ENCODE measurements at regions of chr22 and their contacts with region 1.

Region 1: DNA sequence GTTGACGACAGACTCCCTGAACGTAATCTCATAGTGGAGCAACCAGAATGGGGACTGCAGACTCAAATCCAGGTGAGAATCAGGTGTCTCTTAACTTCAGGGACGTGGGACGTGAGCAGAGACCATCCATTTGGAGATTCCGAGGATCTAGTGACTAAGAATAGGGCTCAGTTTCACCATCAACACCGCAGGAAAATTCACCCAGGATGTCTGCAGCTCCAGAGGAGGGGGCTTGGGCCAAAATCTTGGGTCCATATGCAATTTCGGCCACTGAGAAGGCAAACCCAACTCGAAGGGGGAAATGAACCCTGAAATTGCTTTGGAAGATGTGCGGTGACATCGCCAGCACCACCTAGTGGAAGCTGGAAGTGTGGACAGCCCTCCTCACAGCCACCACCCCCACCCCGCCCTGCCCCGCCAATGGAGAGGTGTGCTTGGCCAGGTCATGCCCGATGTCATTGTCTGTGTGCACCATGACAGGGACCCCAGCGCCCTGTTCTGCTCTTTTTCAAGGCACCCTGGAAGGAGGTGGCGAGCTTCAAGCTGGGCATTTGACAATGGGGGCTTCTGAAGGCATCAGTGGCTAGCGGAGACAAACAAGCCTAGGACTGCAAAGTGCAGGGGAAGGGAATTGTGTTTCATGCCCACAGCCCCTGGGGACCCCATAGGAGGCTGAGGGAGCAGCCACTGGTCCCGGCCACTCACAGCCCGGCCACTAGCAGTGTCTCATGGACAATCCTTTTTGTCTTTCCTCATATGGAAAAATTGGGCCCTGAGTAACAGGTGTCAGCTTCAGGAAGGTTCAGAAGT is 24.8 kb downstream of the APOL1 start:
- DNase-seq: peak; percentile 80
- CTCF ChIP-seq: peak; percentile 68

Region 2: DNA sequence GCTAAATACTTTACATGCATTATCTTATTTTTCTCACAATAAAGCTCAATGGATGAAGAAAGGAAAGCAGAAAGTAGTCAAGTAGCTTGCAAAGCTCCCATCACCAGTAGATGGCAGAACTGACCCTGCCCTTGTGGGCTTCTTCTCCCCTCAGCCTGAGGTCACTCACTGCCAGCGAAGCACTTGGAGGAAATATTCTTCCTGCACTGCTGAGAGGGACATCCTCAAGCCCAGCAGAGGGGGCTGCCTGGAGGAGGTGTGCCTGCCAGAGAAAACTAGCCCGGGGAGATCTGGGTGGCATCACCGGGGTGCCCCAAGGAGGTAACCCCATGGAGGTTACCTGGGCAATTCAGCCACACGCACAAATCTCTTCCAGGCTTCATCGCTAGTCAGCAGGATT is 82.7 kb before region 1 on chr22:
- CTCF ChIA-PET with region 1: interaction called, 11 read pairs
- POLR2A ChIA-PET with region 1: no interaction called
- DNase-seq: peak; percentile 45
- CTCF ChIP-seq: peak; percentile 66

Region 3: GRCh38 chr22:36239401-36240171 is 38.1 kb before region 1 on chr22 and contains the start of gene APOL2:
- CTCF ChIA-PET with region 1: interaction called, 15 read pairs
- POLR2A ChIA-PET with region 1: no interaction called
- DNase-seq: peak; percentile 89
- CTCF ChIP-seq: peak; percentile 77

Region 4: DNA sequence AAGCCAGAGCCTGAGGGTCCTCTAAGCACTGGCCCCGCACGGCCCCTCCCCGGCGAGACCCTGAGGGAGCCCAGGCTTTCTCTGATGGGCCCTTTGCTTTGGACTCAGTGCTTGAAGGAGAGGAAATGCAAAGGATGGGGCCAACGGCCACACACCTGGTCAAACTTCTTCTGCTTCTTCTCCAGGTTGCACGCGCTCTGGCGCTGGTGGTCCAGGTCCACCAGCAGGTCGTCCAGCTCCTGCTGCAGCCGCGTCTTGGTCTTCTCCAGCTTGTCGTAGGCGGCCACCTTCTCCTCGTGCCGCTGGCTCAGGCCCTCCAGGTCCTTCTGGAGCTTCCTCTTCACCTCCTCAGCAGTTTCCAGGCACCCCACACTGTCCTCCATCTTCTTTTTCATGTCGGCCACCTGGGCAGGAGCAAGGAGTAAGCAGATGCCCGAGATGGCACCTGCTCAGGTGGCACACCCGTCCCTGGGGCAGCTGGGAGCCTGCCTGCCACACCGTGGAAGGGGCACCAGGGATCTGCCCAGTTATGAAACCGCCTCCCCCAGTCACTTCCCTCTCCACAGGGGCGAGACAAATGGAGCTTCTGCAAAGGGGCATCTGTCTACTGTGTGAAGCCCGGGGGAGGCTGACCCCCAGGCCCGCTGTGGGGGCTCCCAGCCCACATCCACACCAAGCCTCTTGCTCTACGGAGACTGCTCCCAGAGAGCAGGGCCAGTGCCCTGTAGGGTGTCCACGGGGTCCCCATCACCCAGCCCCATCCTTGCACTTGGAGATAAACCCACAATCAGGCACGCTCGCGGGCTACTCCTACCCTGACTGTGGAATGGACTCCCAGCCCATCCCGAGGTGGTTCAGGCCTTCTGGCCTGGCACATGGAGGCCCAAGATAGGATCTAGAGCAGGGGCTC is 14.4 kb after region 1 on chr22:
- CTCF ChIA-PET with region 1: interaction called, 84 read pairs
- POLR2A ChIA-PET with region 1: interaction called, 3 read pairs
- DNase-seq: no peak
- CTCF ChIP-seq: no peak

Region 5: GRCh38 chr22:36435516-36436415 is 158.1 kb after region 1 on chr22:
- CTCF ChIA-PET with region 1: no interaction called
- POLR2A ChIA-PET with region 1: no interaction called
- DNase-seq: peak; percentile 71
- CTCF ChIP-seq: no peak

Region 6: GRCh38 chr22:36595940-36596339 is 318.3 kb after region 1 on chr22:
- CTCF ChIA-PET with region 1: no interaction called
- POLR2A ChIA-PET with region 1: no interaction called
- DNase-seq: no peak
- CTCF ChIP-seq: no peak

Measured in GM10248 (cell line).